Naive thymus-derived CD4-positive, alpha-beta T cell (primary cell): ENCODE measurements at regions of chr11 and their contacts with region 1.

Region 1: DNA sequence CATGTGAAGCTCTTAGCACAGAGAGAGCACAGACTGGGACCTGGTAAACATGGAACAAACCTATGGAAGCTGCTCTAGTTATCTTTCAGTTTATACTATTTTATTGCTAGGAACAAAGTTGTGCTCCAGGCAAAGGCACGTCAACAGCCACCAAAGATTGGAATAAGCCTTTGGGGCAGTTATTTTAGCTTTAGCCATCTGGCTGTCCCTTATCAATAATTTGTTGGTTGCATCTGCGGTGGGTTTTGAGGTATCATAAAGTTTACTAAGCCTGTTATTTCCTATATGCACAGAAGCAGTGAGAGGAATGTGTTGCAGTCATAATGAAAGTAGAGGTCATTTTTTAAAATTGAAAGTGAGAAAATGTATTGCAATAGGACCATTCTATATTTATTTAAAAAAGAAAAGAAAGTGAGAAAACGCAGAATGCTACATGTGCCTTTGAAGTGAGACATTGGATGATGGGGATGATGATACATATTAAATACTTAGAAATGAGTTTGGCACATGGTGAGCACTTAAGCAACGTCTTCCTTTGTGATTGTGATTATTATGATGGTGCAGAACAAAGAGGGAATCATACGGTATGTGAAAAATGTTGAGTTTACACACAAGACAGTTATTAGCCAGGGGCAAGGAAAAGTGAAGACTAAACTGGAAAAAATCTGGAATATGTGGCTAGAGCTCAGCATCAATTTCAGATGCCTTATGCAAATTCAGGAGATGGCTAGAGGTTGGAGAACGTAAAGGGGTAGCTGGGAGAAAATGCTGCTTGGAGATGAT is 58.3 kb downstream of the PRR5L start:
- DNase-seq: no peak
- ATAC-seq: no peak
- H3K4me3 ChIP-seq: no peak overlapping the region
- H3K4me3 Mint-ChIP-seq: peak overlapping the region in 1 of 10 donors; percentile 45
- H3K27ac ChIP-seq: no peak overlapping the region
- H3K27ac Mint-ChIP-seq: peak overlapping the region in 1 of 9 donors; percentile 18
- H3K4me1 ChIP-seq: peaks cover 0 to 36% of the 10 kb centered on the region in 2 donors
- H3K4me1 Mint-ChIP-seq: peaks cover 0 to 56% (median 4%) of the 10 kb centered on the region in 7 donors
- H3K27me3 ChIP-seq: no peaks in the 10 kb centered on the region
- H3K27me3 Mint-ChIP-seq: peaks cover 9 to 35% (median 25%) of the 10 kb centered on the region in 5 donors

Region 2: DNA sequence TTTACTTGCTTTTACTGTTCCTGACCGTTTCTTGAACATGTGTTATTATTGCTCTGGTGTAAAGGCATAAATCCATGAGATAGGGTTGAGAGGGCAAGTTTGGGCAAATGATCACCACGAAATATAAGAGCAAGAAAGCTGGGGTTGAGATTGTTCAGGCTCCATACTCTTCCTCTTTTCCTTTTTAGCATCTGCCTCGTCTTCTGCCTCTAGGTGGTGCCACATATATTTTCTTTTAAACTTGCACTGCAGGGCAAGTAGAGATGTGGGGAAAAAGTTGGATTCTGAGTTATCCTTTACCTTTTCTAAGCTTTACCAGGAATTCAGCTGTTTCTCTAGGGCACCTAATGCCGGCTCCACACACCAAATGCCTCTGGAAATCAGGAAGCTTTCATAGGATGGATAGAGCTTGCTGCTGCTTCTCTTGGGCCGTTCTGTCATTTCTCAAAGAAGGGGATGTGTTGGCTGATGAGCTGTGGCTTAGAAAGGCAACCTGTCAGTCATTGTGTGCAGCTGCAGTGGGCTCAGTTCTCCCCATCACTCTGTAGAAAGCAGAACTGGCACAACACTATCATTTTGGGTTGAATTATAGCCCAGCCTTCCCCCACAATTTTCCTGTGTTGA is 312.3 kb before region 1 on chr11:
- CTCF ChIA-PET with region 1: no interaction called
- POLR2A ChIA-PET with region 1: no interaction called
- intact Hi-C with region 1: no loop called
- DNase-seq: no peak
- ATAC-seq: no peak
- H3K4me3 ChIP-seq: no peak overlapping the region
- H3K4me3 Mint-ChIP-seq: no peak overlapping the region
- H3K27ac ChIP-seq: no peak overlapping the region
- H3K27ac Mint-ChIP-seq: no peak overlapping the region
- H3K4me1 ChIP-seq: no peaks in the 10 kb centered on the region
- H3K4me1 Mint-ChIP-seq: no peaks in the 10 kb centered on the region
- H3K27me3 ChIP-seq: no peaks in the 10 kb centered on the region
- H3K27me3 Mint-ChIP-seq: peaks cover 0 to 11% (median 9%) of the 10 kb centered on the region in 5 donors

Region 3: GRCh38 chr11:36306888-36307287 is 47.5 kb before region 1 on chr11:
- CTCF ChIA-PET with region 1: no interaction called
- POLR2A ChIA-PET with region 1: no interaction called
- intact Hi-C with region 1: loop called in 1 of 2 experiments (anchors 5 kb)
- DNase-seq: no peak
- ATAC-seq: peak; percentile 26
- H3K4me3 ChIP-seq: no peak overlapping the region
- H3K4me3 Mint-ChIP-seq: no peak overlapping the region
- H3K27ac ChIP-seq: no peak overlapping the region
- H3K27ac Mint-ChIP-seq: no peak overlapping the region
- H3K4me1 ChIP-seq: peaks cover 0 to 5% of the 10 kb centered on the region in 2 donors
- H3K4me1 Mint-ChIP-seq: peaks cover 0 to 8% (median 0%) of the 10 kb centered on the region in 7 donors
- H3K27me3 ChIP-seq: no peaks in the 10 kb centered on the region
- H3K27me3 Mint-ChIP-seq: peaks cover 13 to 38% (median 20%) of the 10 kb centered on the region in 5 donors

Region 4: GRCh38 chr11:36376888-36377758 is 22.7 kb after region 1 on chr11:
- CTCF ChIA-PET with region 1: interaction called, 3 read pairs
- POLR2A ChIA-PET with region 1: no interaction called
- intact Hi-C with region 1: loop called in 1 of 2 experiments (anchors 1 kb)
- DNase-seq: peak in 3 of 9 donors; percentile 12 to 76 (median 26)
- ATAC-seq: peak; percentile 81
- H3K4me3 ChIP-seq: peak overlapping the region; percentile 71
- H3K4me3 Mint-ChIP-seq: peak overlapping the region; percentile 52 to 98 (median 74)
- H3K27ac ChIP-seq: no peak overlapping the region
- H3K27ac Mint-ChIP-seq: peak overlapping the region in 2 of 9 donors; percentile 41 to 85
- H3K4me1 ChIP-seq: peaks cover 0 to 19% of the 10 kb centered on the region in 2 donors
- H3K4me1 Mint-ChIP-seq: peaks cover 6 to 49% (median 22%) of the 10 kb centered on the region in 7 donors
- H3K27me3 ChIP-seq: peaks cover 0 to 5% of the 10 kb centered on the region in 2 donors
- H3K27me3 Mint-ChIP-seq: peaks cover 37 to 67% (median 65%) of the 10 kb centered on the region in 5 donors

Region 5: GRCh38 chr11:36390963-36391471 is 36.6 kb after region 1 on chr11:
- CTCF ChIA-PET with region 1: no interaction called
- POLR2A ChIA-PET with region 1: no interaction called
- intact Hi-C with region 1: no loop called
- DNase-seq: no peak
- ATAC-seq: peak; percentile 77
- H3K4me3 ChIP-seq: no peak overlapping the region
- H3K4me3 Mint-ChIP-seq: peak overlapping the region in 1 of 10 donors; percentile 42
- H3K27ac ChIP-seq: no peak overlapping the region
- H3K27ac Mint-ChIP-seq: no peak overlapping the region
- H3K4me1 ChIP-seq: peaks cover 0 to 60% of the 10 kb centered on the region in 2 donors
- H3K4me1 Mint-ChIP-seq: peaks cover 0 to 69% (median 7%) of the 10 kb centered on the region in 7 donors
- H3K27me3 ChIP-seq: no peaks in the 10 kb centered on the region
- H3K27me3 Mint-ChIP-seq: peaks cover 0 to 23% (median 10%) of the 10 kb centered on the region in 5 donors

Region 6: DNA sequence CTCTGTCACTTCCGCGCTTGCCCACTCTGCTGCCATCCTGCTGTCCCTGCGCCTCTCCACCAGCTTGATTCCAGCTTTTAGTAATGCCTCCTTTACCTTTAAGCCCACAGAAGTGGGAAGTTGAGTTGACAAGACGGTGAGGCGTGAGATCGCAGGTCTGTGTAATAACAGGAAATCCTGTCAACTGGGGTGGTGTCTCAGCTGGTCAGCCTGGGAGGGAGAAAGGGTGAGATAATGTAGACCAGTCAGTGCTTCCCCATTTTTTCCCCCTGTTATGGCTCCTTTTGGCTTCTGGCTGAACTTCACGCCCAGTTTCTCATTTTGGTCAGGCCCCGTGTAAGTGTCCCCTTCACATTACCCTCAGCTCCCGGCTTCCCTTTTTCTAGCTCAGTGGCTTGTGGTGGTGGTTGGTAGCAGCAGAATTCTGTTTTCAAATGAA is 56.8 kb after region 1 on chr11:
- CTCF ChIA-PET with region 1: no interaction called
- POLR2A ChIA-PET with region 1: no interaction called
- intact Hi-C with region 1: no loop called
- DNase-seq: no peak
- ATAC-seq: peak; percentile 89
- H3K4me3 ChIP-seq: no peak overlapping the region
- H3K4me3 Mint-ChIP-seq: peak overlapping the region in 6 of 10 donors; percentile 27 to 58 (median 38)
- H3K27ac ChIP-seq: no peak overlapping the region
- H3K27ac Mint-ChIP-seq: peak overlapping the region in 4 of 9 donors; percentile 28 to 72 (median 34)
- H3K4me1 ChIP-seq: peaks cover 13 to 47% of the 10 kb centered on the region in 2 donors
- H3K4me1 Mint-ChIP-seq: peaks cover 20 to 70% (median 40%) of the 10 kb centered on the region in 7 donors
- H3K27me3 ChIP-seq: no peaks in the 10 kb centered on the region
- H3K27me3 Mint-ChIP-seq: no peaks in the 10 kb centered on the region

Region 7: GRCh38 chr11:36478700-36479329 is 124.4 kb after region 1 on chr11:
- CTCF ChIA-PET with region 1: no interaction called
- POLR2A ChIA-PET with region 1: no interaction called
- intact Hi-C with region 1: loop called in 1 of 2 experiments (anchors 1 kb)
- DNase-seq: peak in 3 of 9 donors; percentile 6 to 27 (median 12)
- ATAC-seq: peak; percentile 47
- H3K4me3 ChIP-seq: no peak overlapping the region
- H3K4me3 Mint-ChIP-seq: no peak overlapping the region
- H3K27ac ChIP-seq: no peak overlapping the region
- H3K27ac Mint-ChIP-seq: no peak overlapping the region
- H3K4me1 ChIP-seq: no peaks in the 10 kb centered on the region
- H3K4me1 Mint-ChIP-seq: peaks cover 0 to 6% (median 0%) of the 10 kb centered on the region in 7 donors
- H3K27me3 ChIP-seq: no peaks in the 10 kb centered on the region
- H3K27me3 Mint-ChIP-seq: no peaks in the 10 kb centered on the region

Region 8: GRCh38 chr11:36558571-36559413 is 204.4 kb after region 1 on chr11:
- CTCF ChIA-PET with region 1: no interaction called
- POLR2A ChIA-PET with region 1: no interaction called
- intact Hi-C with region 1: loop called in 1 of 2 experiments (anchors 5 kb)
- DNase-seq: no peak
- ATAC-seq: peak; percentile 76
- H3K4me3 ChIP-seq: no peak overlapping the region
- H3K4me3 Mint-ChIP-seq: peak overlapping the region in 7 of 10 donors; percentile 3 to 74 (median 32)
- H3K27ac ChIP-seq: no peak overlapping the region
- H3K27ac Mint-ChIP-seq: peak overlapping the region in 2 of 9 donors; percentile 0 to 90
- H3K4me1 ChIP-seq: peaks cover 0 to 18% of the 10 kb centered on the region in 2 donors
- H3K4me1 Mint-ChIP-seq: peaks cover 0 to 27% (median 14%) of the 10 kb centered on the region in 7 donors
- H3K27me3 ChIP-seq: no peaks in the 10 kb centered on the region
- H3K27me3 Mint-ChIP-seq: peaks cover under 1 to 21% (median 10%) of the 10 kb centered on the region in 5 donors